CD8-positive, alpha-beta T cell (primary cell): ENCODE measurements at regions of chr1 and their contacts with region 1.

Region 1: GRCh38 chr1:180662709-180663108 is 30.9 kb downstream of the XPR1 start:
- DNase-seq: no peak
- ATAC-seq: no peak
- H3K4me3 ChIP-seq: no peak overlapping the region
- H3K4me3 Mint-ChIP-seq: no peak overlapping the region
- H3K27ac ChIP-seq: no peak overlapping the region
- H3K27ac Mint-ChIP-seq: no peak overlapping the region
- H3K4me1 ChIP-seq: no peaks in the 10 kb centered on the region
- H3K4me1 Mint-ChIP-seq: peaks cover 12% of the 10 kb centered on the region
- H3K27me3 ChIP-seq: no peaks in the 10 kb centered on the region
- H3K27me3 Mint-ChIP-seq: no peaks in the 10 kb centered on the region
- CTCF ChIP-seq: no peak

Region 2: DNA sequence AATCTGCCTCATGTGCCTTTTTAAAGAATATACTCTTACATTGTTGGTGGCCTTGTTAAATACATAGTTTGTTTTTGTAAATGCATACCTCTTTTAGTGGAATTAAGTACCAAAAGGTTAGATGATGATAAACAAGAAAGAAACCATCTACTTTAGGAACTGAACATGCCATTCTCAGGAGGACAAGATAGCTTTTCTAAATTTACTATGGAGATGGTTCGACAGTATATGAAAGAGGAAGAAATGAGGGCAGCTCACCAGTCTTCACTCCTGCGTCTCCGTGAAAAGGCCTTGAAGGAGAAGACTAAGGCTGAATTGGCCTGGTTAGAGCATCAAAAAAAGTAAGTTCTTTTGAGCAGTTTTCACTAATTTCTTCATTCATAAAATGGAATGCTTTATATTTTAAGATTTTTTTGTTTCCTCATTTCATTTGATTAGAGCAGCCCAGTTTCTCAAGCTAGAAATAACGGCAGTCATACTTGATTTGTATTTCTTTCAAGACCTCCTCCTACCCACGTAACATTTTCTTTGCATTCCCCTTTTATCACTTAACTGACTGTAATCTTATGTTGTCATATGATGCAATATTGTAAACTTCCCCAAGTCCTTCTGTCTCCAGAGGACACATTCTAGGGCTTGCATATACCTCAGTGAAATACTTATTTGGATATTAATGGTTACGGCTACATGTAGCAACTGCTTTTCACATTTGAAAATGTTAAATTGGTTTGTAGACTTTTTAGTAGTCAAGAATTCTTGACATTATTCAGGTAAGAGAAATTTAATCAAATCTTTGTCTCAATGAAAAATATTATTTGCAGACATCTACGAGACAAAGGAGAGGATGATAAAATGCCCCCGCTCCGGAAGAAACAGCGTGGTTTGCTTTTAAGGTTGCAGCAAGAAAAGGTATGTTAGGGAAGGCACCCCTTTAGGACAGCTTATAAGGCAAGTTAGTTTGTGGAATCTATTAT is 608.8 kb before region 1 on chr1:
- CTCF ChIA-PET with region 1: no interaction called
- POLR2A ChIA-PET with region 1: no interaction called
- intact Hi-C with region 1: no loop called
- DNase-seq: no peak
- ATAC-seq: no peak
- H3K4me3 ChIP-seq: no peak overlapping the region
- H3K4me3 Mint-ChIP-seq: no peak overlapping the region
- H3K27ac ChIP-seq: no peak overlapping the region
- H3K27ac Mint-ChIP-seq: no peak overlapping the region
- H3K4me1 ChIP-seq: no peaks in the 10 kb centered on the region
- H3K4me1 Mint-ChIP-seq: peaks cover 2% of the 10 kb centered on the region
- H3K27me3 ChIP-seq: no peaks in the 10 kb centered on the region
- H3K27me3 Mint-ChIP-seq: no peaks in the 10 kb centered on the region
- CTCF ChIP-seq: no peak

Region 3: DNA sequence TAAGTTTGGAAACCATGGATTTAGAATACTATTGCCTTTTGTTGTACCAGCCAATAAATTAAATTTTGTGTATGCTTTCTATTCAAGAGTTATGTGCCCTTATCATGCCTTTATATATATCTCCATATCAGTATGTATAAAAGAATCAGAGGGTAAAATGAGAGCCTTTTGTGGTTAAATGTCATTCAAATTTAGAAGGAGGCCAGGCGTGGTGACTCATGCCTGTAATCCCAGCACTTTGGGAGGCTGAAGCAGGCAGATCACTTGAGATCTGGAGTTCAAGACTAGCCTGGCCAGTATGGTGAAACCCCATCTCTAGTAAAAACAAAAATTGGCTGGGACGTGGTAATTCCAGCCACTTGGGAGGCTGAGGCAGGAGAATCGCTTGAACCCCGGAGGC is 58.0 kb after region 1 on chr1:
- CTCF ChIA-PET with region 1: no interaction called
- POLR2A ChIA-PET with region 1: no interaction called
- intact Hi-C with region 1: loop called in 1 of 2 experiments (anchors 10 kb)
- DNase-seq: no peak
- ATAC-seq: no peak
- H3K4me3 ChIP-seq: no peak overlapping the region
- H3K4me3 Mint-ChIP-seq: no peak overlapping the region
- H3K27ac ChIP-seq: no peak overlapping the region
- H3K27ac Mint-ChIP-seq: no peak overlapping the region
- H3K4me1 ChIP-seq: no peaks in the 10 kb centered on the region
- H3K4me1 Mint-ChIP-seq: peaks cover 10% of the 10 kb centered on the region
- H3K27me3 ChIP-seq: no peaks in the 10 kb centered on the region
- H3K27me3 Mint-ChIP-seq: no peaks in the 10 kb centered on the region
- CTCF ChIP-seq: no peak

Region 4: GRCh38 chr1:180778782-180779398 is 116.2 kb after region 1 on chr1:
- CTCF ChIA-PET with region 1: no interaction called
- POLR2A ChIA-PET with region 1: no interaction called
- intact Hi-C with region 1: loop called in 1 of 2 experiments (anchors 10 kb)
- DNase-seq: peak in 2 of 9 experiments; percentile 4 to 12
- ATAC-seq: no peak
- H3K4me3 ChIP-seq: no peak overlapping the region
- H3K4me3 Mint-ChIP-seq: no peak overlapping the region
- H3K27ac ChIP-seq: no peak overlapping the region
- H3K27ac Mint-ChIP-seq: no peak overlapping the region
- H3K4me1 ChIP-seq: no peaks in the 10 kb centered on the region
- H3K4me1 Mint-ChIP-seq: peaks cover 17% of the 10 kb centered on the region
- H3K27me3 ChIP-seq: no peaks in the 10 kb centered on the region
- H3K27me3 Mint-ChIP-seq: no peaks in the 10 kb centered on the region
- CTCF ChIP-seq: no peak